PC-9 (cell line): ENCODE measurements at regions of chr19 and their contacts with region 1.

Region 1: DNA sequence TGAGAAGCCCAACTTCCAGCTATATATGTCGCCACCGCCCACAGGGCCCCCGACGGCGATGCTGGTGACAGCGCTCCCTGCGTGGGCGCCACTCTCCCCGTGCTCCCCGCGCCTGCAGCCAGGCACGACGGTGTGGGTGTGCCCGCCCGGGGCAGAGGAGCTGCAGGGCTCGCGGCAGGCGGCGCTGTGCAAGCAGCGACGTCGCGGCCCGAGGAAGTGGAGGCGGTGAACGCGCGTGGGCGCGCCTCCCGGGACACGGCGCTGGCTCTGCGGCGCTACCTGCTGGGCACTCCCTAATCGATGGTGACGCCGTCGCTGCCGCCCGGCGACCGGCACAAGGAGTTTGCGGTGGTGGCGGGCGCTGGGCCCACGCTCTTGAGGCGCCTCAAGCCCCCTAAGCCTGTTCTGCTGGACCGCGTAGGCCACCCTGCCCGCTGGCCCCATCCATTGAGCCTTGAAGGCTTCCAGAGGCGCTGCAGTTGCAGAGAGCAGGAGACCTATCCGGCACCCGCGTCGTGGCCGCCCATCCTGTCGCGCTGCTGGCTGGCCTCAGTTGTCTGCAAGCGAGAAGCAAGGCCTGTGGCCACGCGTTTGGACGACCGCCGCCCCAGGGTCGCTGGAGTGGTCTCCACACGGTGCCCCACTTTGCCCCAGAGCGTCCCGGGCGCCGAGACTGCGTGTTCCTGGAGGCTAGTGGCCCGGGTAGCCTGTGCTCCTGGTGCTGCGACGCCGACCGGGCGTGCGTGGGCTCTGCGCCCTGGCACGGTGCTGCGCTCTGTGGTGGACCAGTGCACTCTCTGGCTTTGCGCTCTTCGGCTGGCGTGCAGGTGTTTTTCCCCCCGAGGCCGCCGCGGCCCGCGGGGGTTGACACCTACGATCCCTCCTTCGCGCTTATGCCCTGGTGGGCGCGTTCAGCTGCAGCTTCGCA is 23.1 kb downstream of the LRFN3 start:
- DNase-seq: no peak
- H3K4me3 ChIP-seq: no peak overlapping the region
- H3K27ac ChIP-seq: no peak overlapping the region
- H3K4me1 ChIP-seq: no peaks in the 10 kb centered on the region
- H3K27me3 ChIP-seq: peaks cover 27% of the 10 kb centered on the region
- CTCF ChIP-seq: no peak

Region 2: DNA sequence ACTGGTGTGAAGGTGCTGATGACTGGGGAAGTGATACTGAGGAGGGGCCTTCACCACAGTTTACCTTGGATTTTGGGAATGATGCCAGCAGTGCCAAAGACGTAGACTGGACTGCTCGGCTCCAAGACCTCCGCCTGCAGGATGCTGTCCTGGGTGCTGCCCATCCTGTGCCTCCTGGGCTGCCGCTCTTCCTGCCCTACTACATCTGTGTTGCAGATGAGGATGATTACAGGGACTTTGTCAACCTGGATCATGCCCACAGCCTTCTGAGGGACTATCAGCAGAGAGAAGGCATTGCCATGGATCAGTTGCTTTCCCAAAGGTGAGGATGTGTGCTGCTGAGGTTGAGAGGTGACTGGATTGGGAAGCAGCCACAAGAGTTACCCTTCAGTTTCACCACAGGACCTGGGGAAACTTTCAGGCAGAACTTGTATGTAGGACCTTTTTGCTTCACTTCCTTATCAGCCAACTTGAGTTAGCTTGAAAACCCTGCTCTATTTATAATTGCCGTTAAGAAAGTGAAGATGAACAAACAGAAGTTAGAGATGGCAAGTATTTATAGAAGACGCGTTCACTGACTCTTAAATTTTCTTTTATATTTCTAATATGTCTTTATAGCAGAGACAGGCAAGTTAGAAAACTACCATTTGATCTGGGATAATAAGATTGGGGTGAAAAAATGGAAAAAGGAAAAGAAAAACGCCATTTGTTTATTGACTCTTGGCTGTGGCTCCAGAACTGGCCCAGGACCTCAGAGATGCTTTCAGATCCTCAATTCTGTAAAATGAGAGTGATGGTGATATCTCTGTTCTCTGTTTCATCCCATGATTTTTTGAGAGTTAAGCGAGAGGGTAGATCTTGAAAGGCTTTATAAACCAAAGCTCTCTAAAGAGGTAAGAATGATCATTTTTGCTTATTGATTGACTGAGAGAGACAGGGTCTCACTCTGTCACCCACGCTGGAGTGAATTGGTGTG is 1549.8 kb before region 1 on chr19:
- CTCF ChIA-PET with region 1: no interaction called
- POLR2A ChIA-PET with region 1: no interaction called
- intact Hi-C with region 1: no loop called
- DNase-seq: no peak
- H3K4me3 ChIP-seq: no peak overlapping the region
- H3K27ac ChIP-seq: no peak overlapping the region
- H3K4me1 ChIP-seq: no peaks in the 10 kb centered on the region; the same call in 1 of the 2 replicates
- H3K27me3 ChIP-seq: no peaks in the 10 kb centered on the region
- CTCF ChIP-seq: no peak

Region 3: DNA sequence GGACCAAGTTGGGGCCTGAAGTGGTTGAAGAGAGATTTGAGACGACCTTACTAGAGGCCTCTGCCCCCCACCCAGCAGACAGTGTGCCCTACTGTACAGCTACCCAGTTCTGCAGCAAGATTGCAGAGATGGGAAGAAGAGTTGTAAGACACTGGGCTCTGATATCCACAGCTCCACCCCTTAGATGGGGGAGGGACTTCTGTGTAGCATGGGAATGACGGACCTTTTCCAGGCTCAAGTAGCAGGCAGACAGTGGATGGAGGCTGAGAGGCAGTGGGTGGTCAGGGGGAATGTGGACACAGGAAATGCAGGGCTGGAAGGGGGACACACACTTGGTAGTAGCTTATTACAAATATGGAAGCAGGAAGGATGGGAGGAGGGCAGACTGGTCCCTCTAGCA is 10.2 kb before region 1 on chr19:
- CTCF ChIA-PET with region 1: interaction called, 11 read pairs
- POLR2A ChIA-PET with region 1: no interaction called
- intact Hi-C with region 1: no loop called
- DNase-seq: no peak
- H3K4me3 ChIP-seq: no peak overlapping the region
- H3K27ac ChIP-seq: no peak overlapping the region
- H3K4me1 ChIP-seq: no peaks in the 10 kb centered on the region
- H3K27me3 ChIP-seq: peaks cover 21% of the 10 kb centered on the region
- CTCF ChIP-seq: no peak